ENCODE measurements at regions of chr6 and their contacts with region 1.

Region 1: DNA sequence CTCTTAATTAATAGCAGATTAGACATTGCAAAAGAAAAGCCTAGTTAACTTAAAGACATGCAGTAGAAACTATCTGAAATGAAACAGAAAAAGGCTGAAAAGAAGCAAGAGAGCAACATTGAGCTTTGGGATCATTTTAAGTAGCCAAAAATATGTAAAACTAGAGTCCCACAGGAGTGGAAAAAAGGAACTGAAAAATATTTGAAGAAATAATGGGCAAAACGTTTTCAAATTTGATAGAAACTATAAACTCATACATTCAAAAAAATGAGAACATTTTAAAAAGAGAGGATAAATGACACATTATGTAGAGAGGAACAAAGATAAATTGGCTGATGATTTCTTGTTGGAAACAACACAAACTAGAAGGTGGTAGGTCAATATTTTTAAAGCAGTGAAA is 166.1 kb upstream of the AKAP12 start:
- DNase-seq: no peak

Region 2: DNA sequence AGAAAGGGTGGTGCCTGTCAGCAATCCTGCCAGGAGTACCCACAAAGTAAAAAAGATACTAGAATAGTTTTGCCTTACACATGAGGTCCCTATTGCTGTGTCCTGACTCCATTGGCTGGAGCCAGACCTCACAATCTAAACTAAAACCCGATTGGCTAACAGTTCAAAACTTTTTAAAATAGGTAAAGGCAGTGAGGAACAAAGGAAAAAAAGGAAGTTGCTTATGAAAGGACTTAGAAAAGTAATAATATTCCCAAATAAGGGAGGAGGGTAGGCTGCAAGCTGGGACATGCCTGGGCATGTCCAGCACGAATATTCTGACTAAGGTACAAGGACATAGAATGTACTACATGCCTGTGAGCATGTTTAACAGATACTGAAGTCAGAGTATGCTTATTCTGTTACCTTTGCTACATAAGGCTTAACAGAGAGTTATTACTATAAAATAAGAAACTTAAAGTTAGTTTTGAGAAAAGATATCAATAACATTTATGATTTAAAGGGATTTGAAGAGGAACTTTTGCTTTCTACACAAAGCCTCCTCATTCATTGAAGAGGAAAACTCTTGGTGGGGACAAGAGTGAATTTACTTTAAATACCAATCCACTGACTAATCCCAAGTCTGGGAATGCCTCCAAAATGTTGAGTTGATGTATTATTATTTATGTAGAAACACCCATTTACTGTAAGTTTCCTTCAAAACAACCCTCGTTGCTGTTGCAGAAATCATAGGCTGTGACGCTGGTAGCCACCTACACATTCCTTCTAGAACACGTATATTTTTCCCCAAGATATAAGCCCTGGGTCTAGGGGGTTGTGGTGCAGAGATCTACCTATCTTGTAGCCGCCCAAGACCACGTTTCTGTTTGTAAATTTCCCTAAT is 216.4 kb before region 1 on chr6:
- CTCF ChIA-PET with region 1: no interaction called
- POLR2A ChIA-PET with region 1: no interaction called
- DNase-seq: no peak

Region 3: GRCh38 chr6:151060096-151060765 is 13.5 kb before region 1 on chr6:
- CTCF ChIA-PET with region 1: interaction called, 13 read pairs
- POLR2A ChIA-PET with region 1: no interaction called
- DNase-seq: no peak

Region 4: DNA sequence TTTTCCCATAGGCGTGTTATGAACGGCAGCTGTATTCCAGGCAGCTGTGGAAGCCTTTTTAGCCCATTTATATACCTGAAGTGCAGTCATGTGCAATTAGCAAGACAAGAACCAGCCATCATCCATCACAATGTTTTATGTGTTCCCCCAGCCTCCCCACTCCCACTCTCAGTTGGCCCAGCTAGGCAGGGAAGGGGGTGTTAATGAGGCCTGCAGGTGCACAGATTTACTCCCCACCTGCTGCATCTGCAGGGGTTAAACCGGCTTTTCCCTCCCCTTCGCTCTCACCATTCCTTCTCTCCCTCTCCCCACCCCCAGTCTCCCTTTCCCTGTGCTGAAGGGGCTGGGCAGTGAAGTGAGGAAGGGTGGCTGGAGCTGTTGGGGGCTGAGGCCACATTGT is 16.3 kb after region 1 on chr6:
- CTCF ChIA-PET with region 1: no interaction called
- POLR2A ChIA-PET with region 1: no interaction called
- DNase-seq: no peak